ENCODE measurements at regions of chr14 and their contacts with region 1.

Region 1: GRCh38 chr14:65958664-65959562 is 527.3 kb upstream of the CCDC196 start:
- DNase-seq: no peak
- ATAC-seq: peak; percentile 73
- H3K4me3 Mint-ChIP-seq: no peak overlapping the region
- H3K27ac Mint-ChIP-seq: no peak overlapping the region
- H3K4me1 Mint-ChIP-seq: peaks cover 24% of the 10 kb centered on the region
- H3K27me3 Mint-ChIP-seq: peaks cover 8% of the 10 kb centered on the region

Region 2: DNA sequence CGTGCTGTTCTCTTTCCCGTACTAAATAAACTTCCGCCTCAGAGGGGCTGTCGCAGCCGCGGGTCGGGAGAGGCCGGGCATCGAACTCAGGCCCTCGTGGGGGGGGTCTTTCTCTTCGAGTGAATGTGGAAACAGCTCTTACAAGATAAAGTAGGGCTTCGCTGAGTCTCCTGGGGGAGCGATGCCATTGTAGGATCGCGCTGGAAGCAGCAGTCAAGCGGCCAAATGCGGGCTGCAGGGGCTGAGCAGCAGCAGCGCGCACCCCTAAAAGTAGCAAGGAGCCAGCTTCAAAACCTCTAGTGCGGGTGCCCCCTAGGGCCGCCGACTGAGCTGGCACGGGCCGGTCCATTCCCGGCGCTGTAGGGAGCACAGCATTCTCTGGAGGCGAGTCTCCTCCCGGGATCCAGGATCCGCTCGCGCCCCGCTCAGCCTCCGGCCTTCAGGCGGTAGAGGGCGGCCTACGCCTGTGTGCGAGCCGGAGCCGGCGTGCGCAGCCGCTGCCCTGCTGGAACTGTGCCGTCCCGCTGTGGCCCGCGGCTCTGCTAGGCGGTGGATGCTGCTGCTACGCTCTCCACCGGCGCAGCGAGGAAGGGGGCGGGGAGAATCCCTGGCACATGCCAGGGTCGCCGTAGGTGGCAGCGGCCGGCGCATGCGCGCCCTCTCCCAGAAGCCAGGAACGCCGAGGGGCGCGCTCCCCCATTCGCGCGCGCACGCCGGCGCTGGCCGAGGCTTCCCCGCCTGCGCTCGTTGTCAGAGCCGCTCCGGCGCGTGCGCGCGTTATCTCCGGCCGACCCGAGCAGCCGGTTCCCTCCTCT is 546.7 kb before region 1 on chr14 and contains the start of gene FUT8:
- CTCF ChIA-PET with region 1: interaction called, 52 read pairs
- DNase-seq: peak; percentile 95
- ATAC-seq: peak; percentile 87
- H3K4me3 Mint-ChIP-seq: peak within 1 kb of the TSS; percentile 89
- H3K27ac Mint-ChIP-seq: peak within 1 kb of the TSS; percentile 98
- H3K4me1 Mint-ChIP-seq: peaks cover 49% of the 10 kb centered on the region
- H3K27me3 Mint-ChIP-seq: no peaks in the 10 kb centered on the region
- total RNA-seq, gene FUT8: 114 to 161 TPM

Region 3: DNA sequence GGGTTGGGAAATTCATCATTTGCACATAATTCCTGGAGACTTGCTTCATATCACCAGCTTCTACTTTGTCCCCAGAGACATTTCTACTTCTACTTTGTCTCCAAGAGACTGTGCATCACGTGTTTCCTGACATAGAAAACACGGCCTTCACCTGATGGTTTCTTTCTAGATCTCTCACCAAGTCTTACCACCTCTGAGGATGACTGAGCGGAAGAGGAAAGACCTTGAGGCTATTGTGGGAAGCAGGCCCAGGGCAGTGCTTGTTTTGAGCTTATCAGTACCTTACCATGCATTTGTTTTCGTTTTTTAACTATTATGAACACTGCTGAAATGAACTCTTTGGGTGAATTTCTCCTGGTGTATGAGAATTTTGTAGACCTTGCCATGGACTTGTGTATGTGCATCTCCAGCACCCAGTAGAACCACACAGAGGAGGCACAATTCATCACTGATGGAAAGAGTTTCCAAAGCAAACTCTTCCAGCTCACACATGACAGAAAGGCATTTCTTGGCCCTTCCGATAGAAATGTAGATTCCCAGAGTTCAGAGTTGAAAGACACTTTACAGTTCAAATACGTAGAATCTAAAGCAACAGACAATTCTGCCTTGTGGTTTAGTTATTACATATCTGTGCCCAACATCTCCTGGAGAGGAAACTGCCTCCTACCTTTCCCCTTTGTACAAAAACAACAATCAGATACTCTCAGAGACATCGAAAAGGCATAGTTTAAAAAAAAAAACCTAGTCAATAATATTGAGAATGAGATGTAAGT is 111.7 kb before region 1 on chr14:
- CTCF ChIA-PET with region 1: interaction called, 28 read pairs
- DNase-seq: peak; percentile 94
- ATAC-seq: peak; percentile 84
- H3K4me3 Mint-ChIP-seq: peak overlapping the region; percentile 62
- H3K27ac Mint-ChIP-seq: peak overlapping the region; percentile 96
- H3K4me1 Mint-ChIP-seq: peaks cover 72% of the 10 kb centered on the region
- H3K27me3 Mint-ChIP-seq: no peaks in the 10 kb centered on the region

Region 4: DNA sequence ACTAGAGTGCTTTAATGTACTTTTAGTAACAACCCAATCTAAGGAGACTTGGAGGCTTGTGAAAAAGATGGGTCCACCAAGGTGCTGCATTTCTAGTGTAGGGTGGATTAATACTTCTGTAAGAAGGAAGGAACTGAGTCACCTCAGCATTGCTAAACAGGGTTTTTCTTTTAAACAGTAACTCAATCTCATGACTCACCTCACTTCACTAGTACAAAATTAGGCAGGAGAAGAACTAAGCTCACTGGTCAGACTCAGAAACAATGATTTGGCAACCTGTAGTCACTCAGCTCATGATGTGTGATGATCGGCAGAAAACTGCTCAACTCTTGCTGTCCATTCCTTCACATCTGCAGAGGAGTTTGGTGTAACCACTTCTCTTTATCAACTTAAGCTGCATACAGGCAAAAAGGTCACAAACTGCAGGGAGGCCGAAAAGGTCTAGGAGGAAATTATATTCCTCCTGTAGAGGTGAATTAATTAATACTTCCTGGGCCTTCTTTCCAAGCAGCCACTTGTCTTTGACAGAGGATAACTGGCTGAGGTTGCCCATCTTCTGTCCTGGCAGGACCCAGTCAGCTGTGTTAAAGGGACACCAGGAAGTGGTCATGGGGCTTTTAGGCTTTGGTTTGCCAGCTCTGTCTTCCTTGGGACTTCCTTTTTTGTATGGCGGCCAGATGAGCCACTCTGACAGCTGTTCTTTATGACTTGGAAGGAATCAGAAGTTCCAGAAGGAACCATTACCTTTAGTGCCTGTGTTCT is 79.5 kb before region 1 on chr14:
- CTCF ChIA-PET with region 1: interaction called, 23 read pairs
- DNase-seq: peak; percentile 48
- ATAC-seq: peak; percentile 80
- H3K4me3 Mint-ChIP-seq: no peak overlapping the region
- H3K27ac Mint-ChIP-seq: peak overlapping the region; percentile 87
- H3K4me1 Mint-ChIP-seq: peaks cover 39% of the 10 kb centered on the region
- H3K27me3 Mint-ChIP-seq: no peaks in the 10 kb centered on the region

Region 5: DNA sequence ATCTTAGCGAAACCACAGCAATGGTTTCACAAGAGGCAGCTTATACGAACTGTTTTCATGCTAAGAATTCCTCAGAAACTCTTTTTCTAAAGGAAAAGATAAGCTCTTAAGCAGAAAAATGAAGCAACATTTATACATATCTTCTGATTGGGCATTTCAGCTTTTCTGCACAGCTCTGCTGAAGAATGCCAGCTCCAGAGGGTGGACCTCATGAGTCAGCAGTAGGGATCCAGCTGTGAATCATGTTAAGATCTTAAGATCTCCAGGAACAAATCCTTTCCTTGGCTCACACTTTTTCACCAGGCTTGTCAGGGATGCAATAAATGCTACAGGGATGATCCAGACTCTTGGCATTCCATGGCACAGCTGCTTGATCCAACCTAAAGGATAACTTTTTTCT is 50.2 kb after region 1 on chr14:
- CTCF ChIA-PET with region 1: no interaction called
- DNase-seq: no peak
- ATAC-seq: no peak
- H3K4me3 Mint-ChIP-seq: no peak overlapping the region
- H3K27ac Mint-ChIP-seq: no peak overlapping the region
- H3K4me1 Mint-ChIP-seq: peaks cover 6% of the 10 kb centered on the region
- H3K27me3 Mint-ChIP-seq: peaks cover 20% of the 10 kb centered on the region

Region 6: DNA sequence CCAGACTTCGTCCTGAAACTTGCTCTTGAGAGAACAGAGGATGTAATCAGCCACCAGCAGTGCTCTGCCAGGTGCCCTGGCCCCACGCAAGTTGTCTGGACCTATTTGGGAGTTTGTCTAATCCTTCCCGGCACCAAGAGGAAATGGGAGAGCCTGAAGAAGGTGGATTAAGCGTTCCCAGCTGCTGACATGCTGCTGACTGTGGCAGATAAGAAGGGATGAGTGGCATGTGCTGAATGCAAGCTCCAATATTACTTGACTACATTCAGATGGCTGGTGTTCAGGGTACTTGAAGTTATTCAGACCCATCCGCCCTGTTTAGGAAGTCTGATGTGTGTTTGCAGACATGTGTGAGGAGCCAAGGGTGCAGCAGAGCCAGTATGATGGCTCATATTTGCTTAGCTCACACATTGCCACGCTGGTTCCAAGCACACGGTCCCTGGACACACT is 86.7 kb after region 1 on chr14:
- CTCF ChIA-PET with region 1: no interaction called
- DNase-seq: no peak
- ATAC-seq: no peak
- H3K4me3 Mint-ChIP-seq: no peak overlapping the region
- H3K27ac Mint-ChIP-seq: no peak overlapping the region
- H3K4me1 Mint-ChIP-seq: no peaks in the 10 kb centered on the region
- H3K27me3 Mint-ChIP-seq: peaks cover 20% of the 10 kb centered on the region

Region 7: DNA sequence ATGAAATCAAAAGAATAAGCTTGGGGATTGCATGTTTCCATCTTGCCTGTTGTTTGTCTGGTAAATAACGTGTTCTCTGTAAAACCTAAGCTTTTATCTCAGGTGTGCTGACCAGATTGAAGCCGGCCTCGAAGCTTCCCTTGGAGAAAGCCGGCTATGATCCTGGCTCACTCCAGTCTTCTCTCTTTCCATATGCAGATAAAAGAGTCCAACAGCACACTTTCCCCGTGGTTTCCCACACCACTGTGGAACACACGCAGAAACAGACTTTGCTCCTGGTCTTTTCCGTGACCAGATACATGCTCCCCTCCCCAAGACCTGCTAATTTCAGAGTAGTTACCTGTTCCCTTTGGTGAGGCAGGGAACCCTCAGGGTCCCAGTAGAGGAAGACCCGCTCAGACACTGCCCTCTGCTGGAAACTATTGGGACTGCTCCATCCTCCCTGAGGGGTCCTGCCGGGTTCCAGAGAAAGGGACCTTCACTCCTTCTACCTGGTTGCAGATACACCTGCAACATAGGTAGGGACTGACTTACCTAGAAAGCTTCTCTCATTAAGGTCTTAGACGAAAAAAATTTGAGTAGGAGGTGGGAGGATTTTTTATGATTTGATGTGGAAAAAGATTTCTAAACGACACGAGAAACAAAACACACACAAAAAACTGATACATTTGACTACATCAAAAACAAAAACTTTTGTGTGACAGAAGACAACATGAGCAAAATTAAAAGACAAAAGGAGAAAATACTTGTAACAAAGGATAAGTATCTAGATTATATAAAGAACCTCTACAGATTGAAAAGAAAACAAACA is 111.8 kb after region 1 on chr14:
- CTCF ChIA-PET with region 1: interaction called, 26 read pairs
- DNase-seq: peak; percentile 73
- ATAC-seq: peak; percentile 73
- H3K4me3 Mint-ChIP-seq: no peak overlapping the region
- H3K27ac Mint-ChIP-seq: no peak overlapping the region
- H3K4me1 Mint-ChIP-seq: peaks cover 1% of the 10 kb centered on the region
- H3K27me3 Mint-ChIP-seq: peaks cover 13% of the 10 kb centered on the region

Region 8: DNA sequence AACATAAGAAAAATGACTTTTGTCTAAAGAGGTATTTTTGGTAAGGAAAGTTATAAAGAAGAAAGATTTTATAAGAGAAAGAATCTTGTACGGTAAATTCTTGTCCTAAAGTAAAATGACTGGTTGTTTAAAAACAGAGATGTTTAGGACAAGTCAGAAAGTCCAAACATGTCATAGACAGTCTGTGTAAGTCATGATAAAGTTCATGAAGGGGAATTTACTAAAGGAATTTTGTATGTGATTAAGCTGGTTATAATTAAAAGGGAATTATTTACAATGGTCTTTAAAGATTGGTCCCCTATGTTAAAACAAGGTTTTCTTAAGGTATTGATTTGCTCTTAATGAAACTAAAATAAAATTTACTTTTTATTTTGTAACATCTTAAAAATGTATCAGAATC is 257.9 kb after region 1 on chr14:
- CTCF ChIA-PET with region 1: no interaction called
- DNase-seq: no peak
- ATAC-seq: no peak
- H3K4me3 Mint-ChIP-seq: no peak overlapping the region
- H3K27ac Mint-ChIP-seq: no peak overlapping the region
- H3K4me1 Mint-ChIP-seq: no peaks in the 10 kb centered on the region
- H3K27me3 Mint-ChIP-seq: no peaks in the 10 kb centered on the region